ENCODE measurements at regions of chr1 and their contacts with region 1.

Region 1: DNA sequence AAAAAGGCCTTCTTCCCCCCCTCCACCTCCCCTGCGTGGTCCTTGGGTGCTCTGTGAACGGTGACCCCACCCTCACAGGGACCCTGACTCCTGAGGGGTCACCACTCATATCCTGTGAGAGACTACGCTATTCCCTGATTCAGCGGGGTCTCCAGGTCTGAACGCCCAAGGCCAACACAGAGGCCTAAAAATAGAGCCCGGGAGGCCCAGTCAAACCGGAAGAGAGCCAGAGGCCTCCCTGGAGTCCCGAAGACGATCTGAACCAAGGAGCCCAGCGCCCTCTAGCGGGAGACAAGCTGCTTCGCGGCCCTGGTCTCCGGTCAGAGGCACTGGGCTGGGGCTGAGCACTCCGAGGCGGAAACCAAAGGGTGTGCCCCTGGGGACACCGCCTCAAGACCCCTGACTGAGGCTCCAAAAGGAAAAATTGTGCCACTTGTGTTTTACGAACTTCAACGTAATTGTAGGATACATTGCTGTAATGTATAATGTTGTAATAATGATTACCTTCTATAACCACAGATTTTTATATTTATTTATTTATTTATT is 42.4 kb upstream of the PSEN2 start:
- DNase-seq: peak; percentile 92 to 94
- ATAC-seq: peak; percentile 95 to 98
- H3K4me3 ChIP-seq: peak overlapping the region; percentile 16 to 50 (median 34)
- H3K27ac ChIP-seq: peak overlapping the region; percentile 69 to 87 (median 77)
- H3K4me1 ChIP-seq: peaks cover 11 to 14% of the 10 kb centered on the region in 2 donors
- H3K27me3 ChIP-seq: no peaks in the 10 kb centered on the region
- CTCF ChIP-seq: peak; percentile 93 to 98 (median 96)
- POLR2A ChIP-seq: no peak

Region 2: DNA sequence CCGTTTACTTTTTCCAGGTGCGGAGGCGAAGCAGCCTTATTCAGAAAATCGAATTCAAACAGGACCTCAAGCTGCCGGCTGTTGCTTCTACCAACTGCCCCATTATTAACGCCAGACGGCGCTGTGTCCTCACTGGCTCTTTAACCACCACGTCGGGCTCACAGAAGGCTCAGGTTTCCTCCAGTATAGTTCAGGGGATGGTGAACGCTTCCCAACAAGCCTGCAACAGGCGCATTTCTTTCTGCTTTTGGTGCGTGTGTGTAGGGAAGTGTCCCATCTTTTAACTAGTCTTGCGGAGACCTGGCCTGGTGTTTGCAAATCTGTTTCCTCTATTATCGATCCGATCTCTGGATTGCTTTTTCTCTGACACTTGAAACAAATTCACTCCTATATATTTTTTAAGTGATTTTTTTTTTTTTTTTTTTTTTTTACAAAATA is 280.3 kb before region 1 on chr1:
- in situ Hi-C with region 1: no loop called
- intact Hi-C with region 1: loop called (anchors 5 kb)
- DNase-seq: peak; percentile 78 to 82
- ATAC-seq: peak; percentile 78 to 85
- H3K4me3 ChIP-seq: peak overlapping the region in 2 of 4 donors; percentile 50 to 57
- H3K27ac ChIP-seq: peak overlapping the region in 3 of 4 donors; percentile 13 to 61 (median 47)
- H3K4me1 ChIP-seq: peaks cover 17 to 21% of the 10 kb centered on the region in 2 donors
- H3K27me3 ChIP-seq: peaks cover 9 to 20% (median 10%) of the 10 kb centered on the region in 3 donors
- CTCF ChIP-seq: peak; percentile 68 to 90 (median 78)
- POLR2A ChIP-seq: peak in 1 of 2 donors; percentile 20